A673 (cell line): ENCODE measurements at regions of chr3 and their contacts with region 1.

Region 1: DNA sequence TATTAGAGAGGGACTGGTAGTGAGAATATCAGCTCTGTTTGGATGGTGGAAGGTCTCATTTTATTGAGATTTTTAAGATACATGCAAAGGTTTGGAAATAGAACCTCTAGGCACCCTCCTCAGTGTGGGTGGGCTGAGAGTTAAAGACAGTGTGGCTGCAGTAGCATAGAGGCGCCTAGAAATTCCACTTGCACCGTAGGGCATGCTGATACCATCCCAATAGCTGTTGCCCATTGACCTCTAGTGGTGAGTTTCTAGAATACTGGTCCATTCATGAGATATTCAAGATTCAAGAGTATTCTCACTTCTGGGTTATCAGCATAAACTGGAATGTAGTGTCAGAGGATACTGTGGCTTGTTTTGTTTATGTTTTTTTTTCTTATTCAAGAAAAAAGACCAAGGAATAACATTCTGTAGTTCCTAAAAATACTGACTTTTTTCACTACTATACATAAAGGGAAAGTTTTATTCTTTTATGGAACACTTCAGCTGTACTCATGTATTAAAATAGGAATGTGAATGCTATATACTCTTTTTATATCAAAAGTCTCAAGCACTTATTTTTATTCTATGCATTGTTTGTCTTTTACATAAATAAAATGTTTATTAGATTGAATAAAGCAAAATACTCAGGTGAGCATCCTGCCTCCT is 87.2 kb downstream of the TGFBR2 start:
- DNase-seq: peak; percentile 89
- H3K4me3 ChIP-seq: no peak overlapping the region
- H3K27ac ChIP-seq: no peak overlapping the region
- H3K4me1 ChIP-seq: peaks cover 67% of the 10 kb centered on the region
- H3K27me3 ChIP-seq: no peaks in the 10 kb centered on the region
- CTCF ChIP-seq: peak; percentile 88

Region 2: GRCh38 chr3:30042274-30042859 is 651.2 kb before region 1 on chr3:
- CTCF ChIA-PET with region 1: interaction called, 15 read pairs
- POLR2A ChIA-PET with region 1: no interaction called
- intact Hi-C with region 1: loop called (anchors 1 kb)
- DNase-seq: peak; percentile 93
- H3K4me3 ChIP-seq: no peak overlapping the region
- H3K27ac ChIP-seq: peak overlapping the region; percentile 81
- H3K4me1 ChIP-seq: peaks cover 70% of the 10 kb centered on the region
- H3K27me3 ChIP-seq: no peaks in the 10 kb centered on the region
- CTCF ChIP-seq: peak; percentile 86

Region 3: DNA sequence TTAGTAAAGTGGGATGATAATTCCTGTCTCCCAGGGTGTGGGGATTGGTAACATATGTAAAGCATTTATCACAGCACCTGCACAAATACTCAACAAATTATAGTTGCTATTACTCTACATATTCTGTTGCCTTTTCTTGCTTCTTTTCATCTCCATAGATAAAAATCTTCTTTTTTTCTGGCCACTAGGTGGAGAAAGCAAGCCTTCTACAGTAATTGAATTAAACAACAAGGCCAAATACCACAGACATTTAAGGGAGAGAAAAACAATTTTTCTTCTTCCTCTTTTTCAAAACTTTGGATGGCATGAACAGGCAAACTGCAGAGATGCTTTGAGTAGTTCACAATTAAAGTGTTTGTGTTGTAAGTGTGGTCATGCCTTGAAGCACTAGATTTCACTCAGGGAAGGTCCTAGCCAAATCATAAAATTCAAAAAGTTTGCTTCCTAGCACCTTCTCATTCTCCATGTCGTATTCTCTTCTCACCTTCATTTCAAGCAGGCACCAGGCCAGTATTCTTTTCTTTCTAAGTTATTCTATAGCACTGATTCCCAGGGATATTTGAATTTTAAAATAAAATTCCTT is 580.6 kb before region 1 on chr3:
- CTCF ChIA-PET with region 1: no interaction called
- POLR2A ChIA-PET with region 1: no interaction called
- intact Hi-C with region 1: loop called (anchors 2 kb)
- DNase-seq: peak; percentile 79
- H3K4me3 ChIP-seq: no peak overlapping the region
- H3K27ac ChIP-seq: no peak overlapping the region
- H3K4me1 ChIP-seq: peaks cover 29% of the 10 kb centered on the region
- H3K27me3 ChIP-seq: no peaks in the 10 kb centered on the region
- CTCF ChIP-seq: peak; percentile 76

Region 4: DNA sequence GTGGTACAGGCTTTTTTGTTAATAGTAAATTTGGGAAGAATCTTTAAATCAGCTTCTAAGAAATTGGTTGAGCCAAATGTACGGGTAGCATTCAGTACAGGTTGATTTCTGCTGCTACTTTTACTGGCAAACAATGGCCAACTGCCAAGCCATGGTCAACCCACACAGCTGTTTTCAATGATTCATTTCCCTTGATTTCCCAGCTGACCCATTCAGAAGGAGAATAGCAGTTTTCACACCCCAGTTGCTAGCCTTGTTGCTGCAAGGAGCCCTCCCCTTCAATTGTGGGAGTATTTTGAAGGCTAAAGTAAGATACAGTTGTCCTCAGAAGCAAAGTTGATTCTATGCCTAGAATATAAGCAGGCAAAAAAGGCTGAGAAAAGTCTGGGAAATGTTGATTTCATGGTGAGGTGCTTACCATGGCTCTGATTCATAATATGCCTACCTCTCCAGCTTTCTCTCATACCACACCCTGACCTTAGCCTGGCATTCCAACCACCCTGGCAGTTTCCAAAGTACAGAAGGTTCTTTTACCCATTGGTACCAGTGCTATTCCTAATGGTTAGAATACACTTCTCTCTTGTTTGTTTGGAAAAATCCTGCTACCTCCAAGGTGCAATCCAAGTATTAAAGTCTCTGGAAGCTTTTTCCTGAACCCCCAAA is 407.5 kb before region 1 on chr3:
- CTCF ChIA-PET with region 1: no interaction called
- POLR2A ChIA-PET with region 1: no interaction called
- intact Hi-C with region 1: loop called (anchors 2 kb)
- DNase-seq: peak; percentile 93
- H3K4me3 ChIP-seq: no peak overlapping the region
- H3K27ac ChIP-seq: peak overlapping the region; percentile 48
- H3K4me1 ChIP-seq: peaks cover 56% of the 10 kb centered on the region
- H3K27me3 ChIP-seq: no peaks in the 10 kb centered on the region
- CTCF ChIP-seq: no peak

Region 5: GRCh38 chr3:30511524-30512278 is 181.9 kb before region 1 on chr3:
- CTCF ChIA-PET with region 1: no interaction called
- POLR2A ChIA-PET with region 1: no interaction called
- intact Hi-C with region 1: loop called (anchors 2 kb)
- DNase-seq: peak; percentile 95
- H3K4me3 ChIP-seq: no peak overlapping the region
- H3K27ac ChIP-seq: peak overlapping the region; percentile 72
- H3K4me1 ChIP-seq: peaks cover 27% of the 10 kb centered on the region
- H3K27me3 ChIP-seq: no peaks in the 10 kb centered on the region
- CTCF ChIP-seq: no peak

Region 6: GRCh38 chr3:30658328-30659052 is 35.1 kb before region 1 on chr3:
- CTCF ChIA-PET with region 1: interaction called, 4 read pairs
- POLR2A ChIA-PET with region 1: no interaction called
- intact Hi-C with region 1: loop called (anchors 5 kb)
- DNase-seq: peak; percentile 84
- H3K4me3 ChIP-seq: peak overlapping the region; percentile 5
- H3K27ac ChIP-seq: peak overlapping the region; percentile 92
- H3K4me1 ChIP-seq: peaks cover 98% of the 10 kb centered on the region
- H3K27me3 ChIP-seq: no peaks in the 10 kb centered on the region
- CTCF ChIP-seq: peak; percentile 42

Region 7: DNA sequence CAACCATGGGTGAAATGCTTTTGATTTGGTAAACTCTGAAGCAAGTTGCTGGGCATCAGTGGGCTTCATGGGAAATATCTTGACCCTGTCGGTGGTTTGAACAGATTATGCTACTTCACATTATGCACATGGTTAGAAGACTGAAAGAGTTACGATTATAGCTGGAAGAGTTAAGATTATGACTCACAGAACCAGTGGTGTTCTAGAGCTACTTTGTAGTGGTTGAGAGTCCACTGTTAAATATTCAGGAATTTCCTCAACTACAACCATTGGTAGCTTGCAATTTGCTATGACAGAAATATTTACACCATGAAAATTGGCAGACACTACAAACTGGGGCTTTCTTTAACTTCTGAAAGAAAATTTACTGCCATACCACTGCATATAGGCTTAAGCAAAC is 101.6 kb after region 1 on chr3:
- CTCF ChIA-PET with region 1: no interaction called
- POLR2A ChIA-PET with region 1: no interaction called
- intact Hi-C with region 1: no loop called
- DNase-seq: peak; percentile 23
- H3K4me3 ChIP-seq: no peak overlapping the region
- H3K27ac ChIP-seq: no peak overlapping the region
- H3K4me1 ChIP-seq: peaks cover 12% of the 10 kb centered on the region
- H3K27me3 ChIP-seq: no peaks in the 10 kb centered on the region
- CTCF ChIP-seq: no peak